ENCODE measurements at regions of chr17 and their contacts with region 1.

Region 1: GRCh38 chr17:46182961-46183360 is 10.3 kb downstream of the KANSL1 start:
- DNase-seq: no peak
- ATAC-seq: no peak
- H3K4me3 ChIP-seq: no peak overlapping the region
- H3K27ac ChIP-seq: no peak overlapping the region
- H3K4me1 ChIP-seq: peaks cover 0 to 52% (median 9%) of the 10 kb centered on the region in 4 donors
- H3K27me3 ChIP-seq: no peaks in the 10 kb centered on the region
- CTCF ChIP-seq: no peak
- POLR2A ChIP-seq: no peak

Region 2: GRCh38 chr17:46061435-46061834 is 121.5 kb before region 1 on chr17:
- intact Hi-C with region 1: no loop called
- DNase-seq: no peak
- ATAC-seq: peak; percentile 62 to 74 (median 68)
- H3K4me3 ChIP-seq: no peak overlapping the region
- H3K27ac ChIP-seq: no peak overlapping the region
- H3K4me1 ChIP-seq: peaks cover 0 to 7% (median 0%) of the 10 kb centered on the region in 4 donors
- H3K27me3 ChIP-seq: no peaks in the 10 kb centered on the region
- CTCF ChIP-seq: peak; percentile 42 to 48 (median 46)
- POLR2A ChIP-seq: no peak

Region 3: DNA sequence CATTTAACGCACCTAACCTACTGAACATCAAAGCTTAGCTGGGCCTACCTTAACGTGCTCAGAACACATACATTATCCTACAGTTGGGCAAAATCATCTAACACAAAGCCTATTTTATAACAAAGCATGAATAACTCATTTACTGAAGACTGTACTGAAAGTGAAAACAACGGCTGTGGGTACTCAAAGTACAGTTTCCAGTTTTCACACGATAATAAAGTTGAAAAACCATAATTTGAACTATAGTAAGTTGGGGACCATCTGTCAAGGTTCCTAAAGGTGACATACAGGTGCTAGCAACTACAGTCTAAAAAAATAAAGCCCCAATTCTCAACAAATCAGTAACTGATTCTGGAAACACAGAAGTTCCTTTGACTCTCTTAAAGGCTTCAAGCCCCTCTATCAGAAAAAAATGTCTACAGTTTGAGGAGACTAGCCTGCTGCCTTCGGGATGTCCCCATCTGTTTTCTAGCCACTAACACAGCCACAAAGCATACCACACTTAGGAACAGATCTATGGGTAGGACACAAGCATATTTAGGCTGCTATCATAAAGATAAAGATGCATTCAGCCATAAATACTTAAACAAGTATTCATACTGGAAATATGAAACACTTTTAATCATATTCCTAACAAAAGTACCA is 61.0 kb before region 1 on chr17:
- intact Hi-C with region 1: loop called in 1 of 2 experiments (anchors 10 kb)
- DNase-seq: no peak
- ATAC-seq: no peak
- H3K4me3 ChIP-seq: no peak overlapping the region
- H3K27ac ChIP-seq: no peak overlapping the region
- H3K4me1 ChIP-seq: peaks cover 0 to 52% (median 3%) of the 10 kb centered on the region in 4 donors
- H3K27me3 ChIP-seq: no peaks in the 10 kb centered on the region
- CTCF ChIP-seq: no peak
- POLR2A ChIP-seq: no peak

Measured in right lobe of liver (tissue), 6 donors.